ENCODE measurements at regions of chr3 and their contacts with region 1.

Region 1: DNA sequence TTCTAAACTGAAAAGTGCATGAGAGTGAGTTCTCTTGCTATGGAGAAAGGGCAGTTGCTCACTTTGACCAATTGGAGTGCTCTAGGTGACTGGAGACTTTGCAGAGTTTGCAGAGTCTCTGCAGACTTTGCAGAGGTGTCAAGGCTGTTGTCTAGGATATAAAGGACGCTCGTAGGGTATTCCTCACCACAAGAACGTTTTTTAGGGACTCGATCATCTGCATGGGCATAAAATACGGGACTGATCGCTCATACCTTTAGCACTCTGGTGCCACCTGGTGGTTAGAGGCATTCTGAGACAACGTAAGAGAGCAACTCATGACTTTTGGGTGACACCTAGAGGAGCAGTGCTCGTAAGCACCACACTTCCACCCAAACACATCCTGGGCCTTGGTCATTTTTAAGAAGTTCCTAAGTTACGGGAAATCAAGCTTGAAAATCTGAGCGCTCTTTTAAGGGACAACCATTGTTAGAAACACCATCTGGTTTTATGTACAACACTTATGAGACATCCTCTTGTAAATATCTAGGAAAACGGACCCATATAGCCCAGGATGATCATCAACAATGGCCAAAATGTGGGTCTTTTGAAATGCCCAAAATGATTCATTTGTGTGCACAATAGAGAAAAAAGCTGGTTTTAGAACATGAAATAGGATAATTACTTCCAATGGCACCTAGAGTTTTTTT is 51.6 kb upstream of the XCR1 start:
- DNase-seq: peak; percentile 87
- H3K4me3 ChIP-seq: no peak overlapping the region
- H3K27ac ChIP-seq: no peak overlapping the region
- H3K4me1 ChIP-seq: no peaks in the 10 kb centered on the region
- H3K27me3 ChIP-seq: peaks cover 9 to 11% of the 10 kb centered on the region in 2 experiments
- CTCF ChIP-seq: peak; percentile 88 to 98
- POLR2A ChIP-seq: no peak

Region 2: GRCh38 chr3:45760878-45761711 is 317.8 kb before region 1 on chr3:
- CTCF ChIA-PET with region 1: interaction called, 21 read pairs
- POLR2A ChIA-PET with region 1: no interaction called
- dilution Hi-C with region 1: no loop called
- intact Hi-C with region 1: loop called (anchors 1 kb)
- DNase-seq: peak; percentile 48
- H3K4me3 ChIP-seq: no peak overlapping the region
- H3K27ac ChIP-seq: no peak overlapping the region
- H3K4me1 ChIP-seq: no peaks in the 10 kb centered on the region
- H3K27me3 ChIP-seq: no peaks in the 10 kb centered on the region
- CTCF ChIP-seq: peak; percentile 66 to 95
- POLR2A ChIP-seq: no peak

Region 3: DNA sequence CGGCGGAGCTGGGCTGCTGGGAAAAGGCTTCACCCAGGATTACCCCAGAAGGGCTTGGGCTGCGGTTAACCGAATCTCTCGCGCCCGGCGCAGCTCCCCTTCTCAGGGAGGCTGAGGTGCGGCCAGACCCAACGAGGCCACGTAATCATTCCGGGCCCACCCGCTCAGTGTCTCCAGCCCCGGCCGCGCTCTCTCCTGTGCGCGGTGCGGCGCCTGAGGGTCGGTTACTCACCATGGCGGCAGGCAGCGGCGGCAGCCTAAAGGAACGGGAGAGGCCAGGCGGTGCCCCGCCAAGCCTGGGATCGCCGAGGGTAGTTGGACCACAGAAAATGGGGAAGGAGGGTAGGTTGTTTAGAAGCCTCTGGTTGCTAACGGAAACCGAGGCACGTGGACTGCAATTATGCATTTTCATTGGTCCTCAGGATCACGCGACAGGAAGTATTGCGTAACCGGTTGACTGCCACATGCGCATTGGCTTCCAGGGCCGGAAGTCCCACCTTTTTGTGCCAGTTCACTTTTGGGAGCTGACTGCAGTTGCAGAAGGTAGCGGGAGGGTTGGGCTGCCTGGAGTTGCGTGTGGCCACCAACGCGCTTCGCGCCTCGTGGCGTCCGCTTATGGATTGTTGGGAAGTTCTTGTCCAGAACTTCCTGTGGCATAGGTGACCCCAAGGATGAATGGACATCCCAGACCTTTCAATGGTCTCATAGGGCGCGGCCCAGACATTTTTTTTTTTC is 236.9 kb before region 1 on chr3 and contains the start of gene LZTFL1:
- CTCF ChIA-PET with region 1: no interaction called
- POLR2A ChIA-PET with region 1: no interaction called
- dilution Hi-C with region 1: no loop called
- intact Hi-C with region 1: loop called (anchors 1 kb)
- DNase-seq: peak; percentile 95
- H3K4me3 ChIP-seq: peak within 1 kb of the TSS; percentile 27 to 79 (median 69)
- H3K27ac ChIP-seq: peak within 1 kb of the TSS; percentile 46
- H3K4me1 ChIP-seq: peaks cover 5% of the 10 kb centered on the region
- H3K27me3 ChIP-seq: peaks cover 3 to 8% of the 10 kb centered on the region in 2 experiments
- CTCF ChIP-seq: no peak
- POLR2A ChIP-seq: peak; percentile 62
- total RNA-seq, gene LZTFL1: 15.1 and 18.2 TPM in 2 replicates

Region 4: DNA sequence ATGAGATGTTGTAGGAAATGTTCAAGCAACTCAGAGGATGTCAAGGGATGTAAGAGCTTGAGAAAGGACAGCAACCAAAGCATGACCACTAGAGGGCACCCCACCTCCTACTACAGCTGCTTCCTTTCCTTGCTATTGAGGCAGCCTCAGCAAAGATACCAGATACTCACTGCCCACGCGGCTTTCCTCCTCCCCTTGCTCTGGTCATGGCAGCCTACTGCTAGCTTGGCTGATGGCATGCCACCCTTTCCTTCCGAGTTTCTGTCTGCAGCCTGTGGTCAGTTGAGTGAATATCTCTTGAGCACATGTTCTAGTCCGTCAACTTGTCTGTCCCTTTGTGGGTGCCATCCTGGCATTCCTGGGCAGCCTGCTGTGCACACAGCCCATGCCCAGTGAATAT is 140.0 kb before region 1 on chr3:
- CTCF ChIA-PET with region 1: interaction called, 212 read pairs
- POLR2A ChIA-PET with region 1: no interaction called
- dilution Hi-C with region 1: no loop called
- intact Hi-C with region 1: loop called (anchors 1 kb)
- DNase-seq: peak; percentile 86
- H3K4me3 ChIP-seq: no peak overlapping the region
- H3K27ac ChIP-seq: no peak overlapping the region
- H3K4me1 ChIP-seq: no peaks in the 10 kb centered on the region
- H3K27me3 ChIP-seq: no peaks in the 10 kb centered on the region
- CTCF ChIP-seq: peak; percentile 90 to 93
- POLR2A ChIP-seq: no peak

Region 5: GRCh38 chr3:45986303-45986982 is 92.4 kb before region 1 on chr3:
- CTCF ChIA-PET with region 1: interaction called, 4 read pairs
- POLR2A ChIA-PET with region 1: no interaction called
- dilution Hi-C with region 1: no loop called
- intact Hi-C with region 1: loop called (anchors 5 kb)
- DNase-seq: peak; percentile 76
- H3K4me3 ChIP-seq: no peak overlapping the region
- H3K27ac ChIP-seq: peak overlapping the region; percentile 94
- H3K4me1 ChIP-seq: peaks cover 38% of the 10 kb centered on the region
- H3K27me3 ChIP-seq: no peaks in the 10 kb centered on the region
- CTCF ChIP-seq: no peak
- POLR2A ChIP-seq: no peak

Region 6: GRCh38 chr3:46068501-46068900 is 10.4 kb before region 1 on chr3:
- CTCF ChIA-PET with region 1: interaction called, 18 read pairs
- POLR2A ChIA-PET with region 1: no interaction called
- dilution Hi-C with region 1: no loop called
- intact Hi-C with region 1: no loop called
- DNase-seq: no peak
- H3K4me3 ChIP-seq: no peak overlapping the region
- H3K27ac ChIP-seq: no peak overlapping the region
- H3K4me1 ChIP-seq: no peaks in the 10 kb centered on the region
- H3K27me3 ChIP-seq: peaks cover 2 to 18% of the 10 kb centered on the region in 2 experiments
- CTCF ChIP-seq: no peak
- POLR2A ChIP-seq: no peak

Region 7: DNA sequence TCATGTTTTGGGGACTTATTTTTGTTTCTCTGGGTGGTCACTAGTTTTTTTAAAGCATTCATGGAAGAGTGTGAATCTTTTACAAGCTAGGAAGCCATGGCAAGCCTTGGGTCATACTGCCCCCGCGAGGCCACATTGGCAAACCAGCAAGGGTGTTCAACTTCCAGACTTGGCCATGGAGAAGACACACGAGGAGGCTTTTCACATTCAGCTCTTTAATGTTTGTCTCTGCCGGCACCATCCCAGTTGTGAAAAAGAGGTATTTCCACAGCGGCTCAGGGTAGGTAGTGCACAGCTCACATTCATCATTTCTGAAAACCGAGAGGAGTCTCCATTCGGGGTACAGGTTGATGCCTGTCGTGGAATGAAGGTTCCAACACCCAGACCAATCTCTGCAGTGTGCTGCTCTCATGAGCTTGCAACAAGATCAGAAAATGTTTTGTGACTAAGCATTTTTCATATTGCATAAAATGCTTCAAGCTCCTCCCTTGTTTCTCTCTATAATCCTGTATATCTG is 299.6 kb after region 1 on chr3:
- CTCF ChIA-PET with region 1: interaction called, 8 read pairs
- POLR2A ChIA-PET with region 1: no interaction called
- dilution Hi-C with region 1: no loop called
- intact Hi-C with region 1: loop called (anchors 5 kb)
- DNase-seq: peak; percentile 56
- H3K4me3 ChIP-seq: no peak overlapping the region
- H3K27ac ChIP-seq: no peak overlapping the region
- H3K4me1 ChIP-seq: no peaks in the 10 kb centered on the region
- H3K27me3 ChIP-seq: peaks cover 8 to 13% of the 10 kb centered on the region in 2 experiments
- CTCF ChIP-seq: peak; percentile 76 to 82
- POLR2A ChIP-seq: no peak

Measured in endothelial cell of umbilical vein (primary cell).